ENCODE measurements at regions of chr1 and their contacts with region 1.

Region 1: DNA sequence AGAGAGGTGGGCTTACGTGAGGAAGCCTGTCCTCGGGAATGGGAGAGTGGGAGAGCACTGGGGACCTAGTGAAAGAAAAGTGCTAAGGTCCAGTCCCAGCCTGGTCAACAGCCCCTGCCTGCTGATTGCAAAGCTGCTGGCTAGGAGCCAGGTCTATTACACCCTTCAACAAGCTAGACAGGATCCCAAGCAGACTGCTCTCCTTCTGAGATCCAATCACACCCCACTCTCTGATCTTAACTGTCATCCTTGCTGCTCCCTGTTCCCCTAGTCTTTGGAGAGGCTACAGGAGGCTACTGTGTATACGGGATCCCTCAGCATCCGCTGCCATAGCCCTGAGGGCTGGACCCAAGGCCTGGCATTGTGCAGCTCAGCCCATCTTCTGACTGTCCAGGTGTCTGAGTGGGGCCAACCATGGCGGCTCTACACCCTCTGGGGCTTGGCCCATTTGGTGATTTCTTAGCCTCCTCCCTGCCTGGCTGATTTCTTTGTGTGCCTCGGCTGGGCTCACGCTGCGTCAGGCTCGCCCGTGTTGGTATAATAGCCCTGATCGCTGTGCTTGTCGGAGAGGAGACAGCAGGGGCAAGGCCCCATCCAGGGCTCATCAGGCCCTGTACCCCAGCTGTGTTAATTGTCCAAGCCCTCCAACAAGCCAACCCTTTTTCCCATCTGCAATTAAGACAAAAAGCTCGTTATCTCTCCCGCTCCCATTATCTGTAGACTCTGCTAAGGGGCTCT is 43.9 kb downstream of the NAV1 start:
- DNase-seq: no peak
- ATAC-seq: peak; percentile 45 to 51; a peak in 3 of 6 replicates
- H3K4me3 ChIP-seq: no peak overlapping the region
- H3K27ac ChIP-seq: peak overlapping the region; percentile 23 to 73; a peak in 4 of 6 replicates
- H3K4me1 ChIP-seq: peaks cover 37% of the 10 kb centered on the region
- CTCF ChIP-seq: no peak
- EP300 ChIP-seq: no peak
- POLR2A ChIP-seq: no peak
- RAD21 ChIP-seq: no peak

Region 2: DNA sequence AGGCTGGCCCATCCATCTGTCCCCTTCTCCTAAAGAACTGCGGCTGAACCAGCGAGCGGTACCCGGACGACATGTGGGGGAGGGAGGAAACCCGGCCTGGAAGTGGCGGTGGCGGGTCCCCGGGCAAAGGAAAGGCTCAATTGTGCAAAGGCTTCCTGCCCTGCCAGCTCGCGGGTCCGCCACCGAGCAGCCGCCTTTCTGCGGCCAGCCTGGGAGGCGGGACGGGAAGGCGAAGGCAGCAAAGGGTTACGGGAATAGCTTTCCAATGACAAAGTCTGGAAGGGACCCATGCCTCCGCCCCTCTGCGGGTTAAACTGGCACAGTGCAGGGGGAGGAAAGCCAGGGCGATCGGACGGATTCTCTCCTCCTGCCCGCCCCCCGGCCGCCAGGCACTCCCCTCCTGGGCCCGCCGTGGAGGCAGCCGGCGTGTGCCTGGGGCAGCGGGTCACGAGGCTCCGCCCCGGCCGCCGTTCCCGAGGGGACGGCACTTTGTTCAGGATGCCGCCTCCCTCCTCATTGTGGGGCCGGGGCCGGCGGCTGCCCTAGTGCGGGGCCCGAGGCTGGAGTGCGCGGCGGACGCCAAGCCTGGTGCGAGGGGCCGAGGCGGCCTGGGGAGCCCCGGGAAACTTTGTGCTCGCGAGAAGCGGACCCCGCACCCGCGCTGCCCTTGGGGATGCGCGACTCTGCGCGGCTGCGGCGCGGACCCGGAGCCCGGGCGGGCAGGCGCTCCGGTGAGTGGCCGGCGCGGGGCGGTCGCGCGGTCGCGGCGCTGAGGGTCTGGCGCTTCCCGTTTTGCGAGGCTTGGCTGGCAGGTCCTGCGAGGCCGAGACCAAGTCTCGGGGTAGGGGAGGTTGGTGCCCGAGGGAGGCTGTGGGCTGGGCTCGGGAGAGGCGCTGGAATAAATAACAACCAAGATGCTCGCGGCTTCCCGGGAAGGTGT is 44.0 kb before region 1 on chr1 and contains the start of gene NAV1:
- CTCF ChIA-PET with region 1: no interaction called
- POLR2A ChIA-PET with region 1: no interaction called
- DNase-seq: peak; percentile 52 to 71
- ATAC-seq: peak; percentile 64 to 85
- H3K4me3 ChIP-seq: peak within 1 kb of the TSS; percentile 77
- H3K27ac ChIP-seq: peak within 1 kb of the TSS; percentile 64 to 92
- H3K4me1 ChIP-seq: peaks cover 40% of the 10 kb centered on the region
- CTCF ChIP-seq: no peak
- EP300 ChIP-seq: no peak
- POLR2A ChIP-seq: no peak; the same call in none of the 2 replicates
- RAD21 ChIP-seq: no peak
- polyA plus RNA-seq, gene NAV1: 3.7 and 6.4 TPM in 2 replicates

Region 3: DNA sequence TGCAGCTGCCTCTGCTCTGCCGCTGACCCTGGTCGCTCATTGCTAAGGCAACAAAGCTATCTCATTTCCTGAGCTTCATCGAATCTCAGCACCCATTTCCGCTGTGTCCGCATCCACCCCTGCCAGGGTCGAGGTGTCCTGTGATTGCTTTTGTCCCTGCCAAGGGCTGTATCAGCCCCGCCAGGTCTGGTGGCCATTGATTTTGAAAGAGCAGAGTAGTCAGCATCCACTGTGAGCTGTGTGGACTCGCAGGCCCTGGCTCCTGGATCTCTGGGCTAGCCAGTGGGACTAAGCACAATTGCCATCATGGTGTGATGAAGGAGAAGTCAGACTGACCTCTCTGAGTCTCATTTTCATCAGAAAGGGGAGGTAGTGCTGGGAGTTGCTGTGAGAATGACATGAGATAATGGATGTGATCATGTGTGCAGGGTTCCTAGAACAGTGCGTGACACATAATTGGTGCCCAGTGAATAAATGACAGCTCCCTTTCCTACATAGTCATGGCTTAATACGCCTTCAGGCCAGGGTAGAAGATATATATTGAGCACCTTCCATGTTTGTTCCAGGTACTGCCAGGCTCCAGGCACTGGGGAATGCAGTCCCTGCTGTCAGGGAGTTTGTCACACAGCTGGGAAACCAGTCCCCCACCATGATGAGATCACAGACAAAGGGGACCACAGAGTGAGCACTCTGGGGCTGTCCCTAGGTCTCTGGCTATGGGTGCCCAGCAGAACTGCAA is 11.8 kb before region 1 on chr1:
- CTCF ChIA-PET with region 1: interaction called, 17 read pairs
- POLR2A ChIA-PET with region 1: no interaction called
- DNase-seq: no peak
- ATAC-seq: no peak
- H3K4me3 ChIP-seq: no peak overlapping the region
- H3K27ac ChIP-seq: peak overlapping the region in 1 of 2 experiments; percentile 33; a peak in 1 of 6 replicates
- H3K4me1 ChIP-seq: no peaks in the 10 kb centered on the region
- CTCF ChIP-seq: no peak
- EP300 ChIP-seq: no peak
- POLR2A ChIP-seq: no peak
- RAD21 ChIP-seq: no peak

Region 4: DNA sequence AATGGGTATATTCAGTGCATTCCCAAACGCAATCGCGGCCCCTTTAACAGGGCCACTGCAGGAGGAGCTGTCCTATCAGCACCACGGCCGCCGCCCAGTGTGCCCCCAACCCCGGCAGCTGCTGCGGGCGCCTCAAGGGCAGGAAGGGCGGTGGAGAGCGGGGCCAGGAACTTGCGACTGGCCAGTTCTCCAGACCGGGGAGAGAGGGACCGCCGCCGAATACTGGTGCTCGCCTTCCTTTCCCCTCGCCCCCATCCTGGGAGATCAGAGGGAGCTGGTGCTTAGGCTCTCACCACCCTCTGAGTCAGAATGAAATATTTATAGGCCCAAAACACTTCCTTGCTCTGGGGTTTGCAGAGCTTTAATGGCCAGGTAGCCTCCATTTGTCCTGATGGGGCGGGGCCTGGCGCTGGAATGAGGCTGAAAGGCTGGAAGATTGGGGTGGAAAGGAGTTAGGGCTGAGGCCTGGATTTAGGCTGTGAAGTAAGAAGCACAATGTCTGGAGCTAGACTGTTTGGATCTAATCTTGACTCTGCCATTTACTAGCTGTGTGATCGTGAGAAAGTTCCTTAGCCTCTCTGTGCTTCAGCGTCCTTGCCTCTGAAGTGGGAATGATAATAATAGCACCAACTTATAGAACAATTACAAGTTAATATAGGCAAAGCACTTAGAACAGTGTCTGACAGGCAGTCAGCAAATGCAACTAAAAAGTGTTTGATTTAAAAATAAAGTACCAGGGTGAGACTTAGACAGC is 31.6 kb after region 1 on chr1:
- CTCF ChIA-PET with region 1: no interaction called
- POLR2A ChIA-PET with region 1: no interaction called
- DNase-seq: no peak
- ATAC-seq: peak in 1 of 2 experiments; percentile 32; a peak in 2 of 6 replicates
- H3K4me3 ChIP-seq: no peak overlapping the region
- H3K27ac ChIP-seq: no peak overlapping the region
- H3K4me1 ChIP-seq: peaks cover 7% of the 10 kb centered on the region
- CTCF ChIP-seq: no peak
- EP300 ChIP-seq: no peak
- POLR2A ChIP-seq: no peak
- RAD21 ChIP-seq: no peak

Measured in A549 (cell line).